ENCODE measurements at regions of chr17 and their contacts with region 1.

Region 1: GRCh38 chr17:45584092-45585036 is 93.8 kb upstream of the PLEKHM1 start:
- DNase-seq: peak; percentile 51 to 74 (median 59)
- ATAC-seq: peak; percentile 16 to 79 (median 71)
- H3K4me3 ChIP-seq: peak overlapping the region; percentile 57 to 94 (median 82)
- H3K27ac ChIP-seq: peak overlapping the region; percentile 28 to 91 (median 80)
- H3K4me1 ChIP-seq: peaks cover 0 to 26% (median 7%) of the 10 kb centered on the region in 12 donors
- H3K27me3 ChIP-seq: no peaks in the 10 kb centered on the region
- CTCF ChIP-seq: peak in 1 of 12 donors; percentile 4
- POLR2A ChIP-seq: no peak

Region 2: GRCh38 chr17:45660474-45660873 is 76.1 kb after region 1 on chr17:
- intact Hi-C with region 1: no loop called
- DNase-seq: no peak
- ATAC-seq: no peak
- H3K4me3 ChIP-seq: no peak overlapping the region
- H3K27ac ChIP-seq: no peak overlapping the region
- H3K4me1 ChIP-seq: no peaks in the 10 kb centered on the region
- H3K27me3 ChIP-seq: peaks cover 0 to 26% (median 2%) of the 10 kb centered on the region in 9 donors
- CTCF ChIP-seq: no peak
- POLR2A ChIP-seq: no peak

Region 3: GRCh38 chr17:46020023-46020761 is 435.8 kb after region 1 on chr17:
- intact Hi-C with region 1: loop called in 1 of 10 experiments (anchors 10 kb)
- DNase-seq: no peak
- ATAC-seq: peak in 2 of 4 donors; percentile 35 to 45
- H3K4me3 ChIP-seq: no peak overlapping the region
- H3K27ac ChIP-seq: peak overlapping the region in 1 of 12 donors; percentile 64
- H3K4me1 ChIP-seq: no peaks in the 10 kb centered on the region
- H3K27me3 ChIP-seq: no peaks in the 10 kb centered on the region
- CTCF ChIP-seq: no peak
- POLR2A ChIP-seq: no peak

Region 4: DNA sequence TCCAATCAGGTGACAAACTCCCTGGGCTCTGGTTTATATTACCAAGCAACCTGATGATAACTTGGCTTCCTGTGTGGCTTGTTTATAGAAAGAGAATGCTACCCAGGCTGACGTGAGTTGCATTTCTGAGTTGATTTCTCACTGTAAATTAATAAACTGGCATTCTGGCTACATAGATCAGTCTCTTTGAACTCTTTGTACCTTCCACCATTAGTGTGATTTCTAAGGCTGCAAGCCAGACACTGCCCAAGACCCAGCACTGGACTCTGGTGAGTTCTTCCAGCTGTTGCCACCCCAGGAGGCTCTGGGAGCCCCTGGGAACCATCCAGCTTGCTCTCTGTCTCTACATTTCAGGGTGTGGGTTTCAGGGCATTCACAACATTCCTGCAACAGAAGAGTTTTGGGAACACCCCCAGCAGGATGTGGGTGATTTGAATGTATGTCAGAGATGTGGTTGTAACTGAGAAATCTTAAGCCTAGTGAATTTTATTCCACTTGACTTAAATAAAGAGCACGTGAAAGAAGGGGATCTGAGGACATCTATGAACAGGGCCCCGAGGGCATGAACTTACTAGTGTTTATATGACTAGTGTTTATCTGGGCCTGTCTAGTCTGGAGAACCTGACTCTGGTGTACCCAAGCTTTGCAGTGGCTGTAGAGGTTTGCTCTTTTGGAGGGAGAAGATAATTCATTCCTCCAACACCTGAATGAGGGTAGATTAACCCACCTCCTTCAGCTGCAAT is 680.3 kb after region 1 on chr17:
- intact Hi-C with region 1: loop called in 1 of 10 experiments (anchors 5 kb)
- DNase-seq: no peak
- ATAC-seq: no peak
- H3K4me3 ChIP-seq: no peak overlapping the region
- H3K27ac ChIP-seq: peak overlapping the region in 1 of 12 donors; percentile 44
- H3K4me1 ChIP-seq: peaks cover 0 to 17% (median 9%) of the 10 kb centered on the region in 12 donors
- H3K27me3 ChIP-seq: peaks cover 0 to 4% (median 0%) of the 10 kb centered on the region in 9 donors
- CTCF ChIP-seq: no peak
- POLR2A ChIP-seq: no peak